PC-3 (cell line): ENCODE measurements at regions of chr2 and their contacts with region 1.

Region 1: GRCh38 chr2:172253190-172254052 is 150.7 kb upstream of the DLX2 start:
- DNase-seq: peak; percentile 98
- ATAC-seq: peak; percentile 60
- H3K4me3 ChIP-seq: no peak overlapping the region
- H3K27ac ChIP-seq: peak overlapping the region; percentile 90
- H3K4me1 ChIP-seq: peaks cover 55% of the 10 kb centered on the region
- H3K27me3 ChIP-seq: no peaks in the 10 kb centered on the region
- CTCF ChIP-seq: no peak

Region 2: DNA sequence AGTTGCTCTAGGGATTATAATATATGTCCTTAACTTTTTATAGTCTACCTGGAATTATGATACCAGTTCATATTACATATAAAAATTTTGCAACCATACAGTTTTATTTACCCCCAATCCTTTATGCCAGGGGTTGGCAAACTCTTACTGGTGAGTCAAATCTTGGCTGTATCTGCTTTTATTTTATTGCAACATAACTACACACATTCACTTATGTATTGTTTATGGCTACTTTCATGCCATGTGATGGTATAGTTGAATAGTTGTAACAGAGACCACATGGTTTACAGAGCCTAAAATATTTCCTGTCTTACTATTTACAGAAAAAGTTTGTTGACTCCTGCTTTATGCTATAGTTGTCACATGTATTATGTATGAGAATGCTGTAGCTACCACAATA is 124.9 kb before region 1 on chr2:
- CTCF ChIA-PET with region 1: no interaction called
- POLR2A ChIA-PET with region 1: no interaction called
- intact Hi-C with region 1: loop called (anchors 1 kb)
- DNase-seq: peak; percentile 95
- ATAC-seq: peak; percentile 97
- H3K4me3 ChIP-seq: no peak overlapping the region
- H3K27ac ChIP-seq: peak overlapping the region; percentile 50
- H3K4me1 ChIP-seq: peaks cover 11% of the 10 kb centered on the region
- H3K27me3 ChIP-seq: no peaks in the 10 kb centered on the region
- CTCF ChIP-seq: no peak

Region 3: GRCh38 chr2:172172513-172173173 is 80.8 kb before region 1 on chr2:
- CTCF ChIA-PET with region 1: interaction called, 3 read pairs
- POLR2A ChIA-PET with region 1: no interaction called
- intact Hi-C with region 1: loop called (anchors 2 kb)
- DNase-seq: peak; percentile 85
- ATAC-seq: peak; percentile 96
- H3K4me3 ChIP-seq: peak overlapping the region; percentile 65
- H3K27ac ChIP-seq: peak overlapping the region; percentile 42
- H3K4me1 ChIP-seq: peaks cover 29% of the 10 kb centered on the region
- H3K27me3 ChIP-seq: no peaks in the 10 kb centered on the region
- CTCF ChIP-seq: peak; percentile 85

Region 4: GRCh38 chr2:172339371-172340010 is 86.1 kb after region 1 on chr2:
- CTCF ChIA-PET with region 1: no interaction called
- POLR2A ChIA-PET with region 1: no interaction called
- intact Hi-C with region 1: loop called (anchors 2 kb)
- DNase-seq: no peak
- ATAC-seq: no peak
- H3K4me3 ChIP-seq: no peak overlapping the region
- H3K27ac ChIP-seq: no peak overlapping the region
- H3K4me1 ChIP-seq: peaks cover 31% of the 10 kb centered on the region
- H3K27me3 ChIP-seq: no peaks in the 10 kb centered on the region
- CTCF ChIP-seq: no peak

Region 5: DNA sequence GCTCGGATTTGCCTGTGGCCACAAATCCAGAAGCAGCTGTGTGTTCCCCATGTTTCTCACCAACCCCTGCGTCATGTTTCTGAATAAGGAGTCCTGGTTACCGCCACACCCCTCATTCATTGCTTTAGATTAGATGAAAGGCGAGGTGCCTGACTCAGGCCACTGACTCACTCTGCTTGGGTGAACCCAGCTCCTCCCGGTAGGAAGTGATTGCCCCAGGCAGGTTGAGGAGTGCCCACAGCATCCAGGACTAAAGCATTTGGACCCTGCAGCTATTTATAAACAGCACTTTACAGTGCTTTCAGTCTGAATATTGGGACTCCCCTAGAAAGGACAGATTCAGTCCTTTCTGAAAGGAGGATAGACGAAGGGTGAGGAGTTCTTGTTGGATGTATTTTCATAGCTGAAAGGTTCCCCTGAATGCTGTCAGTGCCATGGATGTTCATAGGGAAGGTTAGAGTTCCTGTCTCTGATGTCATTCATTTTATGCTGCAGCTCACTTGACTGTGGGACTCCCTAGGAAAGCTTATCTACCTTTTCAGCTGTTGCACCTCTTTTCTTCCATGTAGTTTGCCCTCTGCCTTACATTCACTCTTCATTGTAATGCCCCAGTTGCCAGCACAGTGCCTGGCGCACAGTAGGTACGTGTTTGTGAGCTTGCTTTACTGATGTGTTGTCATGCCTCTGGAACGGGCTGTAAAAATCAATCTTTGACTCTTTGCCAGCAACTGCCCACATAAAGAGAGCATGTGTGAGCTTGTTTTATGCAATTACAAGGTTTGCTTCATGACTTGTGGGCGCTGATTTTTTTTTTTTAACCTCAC is 188.9 kb after region 1 on chr2:
- CTCF ChIA-PET with region 1: no interaction called
- POLR2A ChIA-PET with region 1: interaction called, 3 read pairs
- intact Hi-C with region 1: loop called (anchors 5 kb)
- DNase-seq: peak; percentile 99
- ATAC-seq: peak; percentile 81
- H3K4me3 ChIP-seq: peak overlapping the region; percentile 47
- H3K27ac ChIP-seq: peak overlapping the region; percentile 97
- H3K4me1 ChIP-seq: peaks cover 77% of the 10 kb centered on the region
- H3K27me3 ChIP-seq: no peaks in the 10 kb centered on the region
- CTCF ChIP-seq: no peak